H1 (cell line): ENCODE measurements at regions of chr6 and their contacts with region 1.

Region 1: DNA sequence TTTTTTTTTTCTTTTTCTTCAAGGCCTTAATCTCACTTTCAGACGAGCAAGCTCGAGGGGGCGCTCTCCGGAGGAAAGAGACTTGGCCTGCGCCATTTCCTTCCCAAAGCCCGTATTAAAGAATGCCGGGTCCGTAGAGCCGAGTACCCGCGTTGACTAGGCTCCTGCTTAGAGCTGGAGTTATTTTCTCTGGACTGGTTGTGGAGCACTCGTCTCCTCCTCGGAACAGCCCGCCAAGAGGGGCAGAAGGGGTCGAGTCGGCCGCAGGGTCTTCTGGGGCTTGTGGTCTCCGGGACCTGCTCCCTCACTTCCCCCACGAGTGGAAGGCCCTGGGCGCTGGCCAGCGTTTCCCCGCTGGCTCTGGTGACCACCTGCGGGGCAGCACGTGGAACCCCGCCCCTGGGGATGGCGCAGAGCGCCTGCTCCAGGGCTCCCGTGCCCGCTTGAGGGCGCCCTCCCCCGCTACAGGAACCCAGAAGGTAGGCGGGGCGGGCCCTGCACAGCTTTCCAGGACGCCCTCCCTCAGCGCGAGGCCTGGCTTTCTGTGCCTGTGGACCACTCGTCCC is 2.7 kb upstream of the MEI4 start:
- DNase-seq: peak; percentile 81 to 95
- H3K4me3 ChIP-seq: peak overlapping the region; percentile 45 to 66 (median 50); a peak in 7 of 8 replicates
- H3K27ac ChIP-seq: peak overlapping the region; percentile 58; the same call in 1 of the 2 replicates
- H3K4me1 ChIP-seq: no peaks in the 10 kb centered on the region
- H3K27me3 ChIP-seq: no peaks in the 10 kb centered on the region
- CTCF ChIP-seq: peak; percentile 69 to 89 (median 82)
- EP300 ChIP-seq: no peak
- POLR2A ChIP-seq: peak in 1 of 2 experiments; percentile 61; a peak in 2 of 3 replicates
- RAD21 ChIP-seq: peak; percentile 82 to 90

Region 2: GRCh38 chr6:77466055-77466450 is 184.1 kb before region 1 on chr6:
- CTCF ChIA-PET with region 1: interaction called, 37 read pairs
- POLR2A ChIA-PET with region 1: no interaction called
- DNase-seq: peak in 1 of 2 experiments; percentile 72
- H3K4me3 ChIP-seq: peak overlapping the region; percentile 81 to 90 (median 86)
- H3K27ac ChIP-seq: no peak overlapping the region
- H3K4me1 ChIP-seq: peaks cover 0 to 5% (median under 1%) of the 10 kb centered on the region in 4 experiments; a peak in 5 of 7 replicates
- H3K27me3 ChIP-seq: peaks cover 4 to 53% (median 46%) of the 10 kb centered on the region in 4 experiments
- CTCF ChIP-seq: peak; percentile 65 to 79 (median 68)
- EP300 ChIP-seq: no peak
- POLR2A ChIP-seq: no peak
- RAD21 ChIP-seq: peak; percentile 75 to 84

Region 3: GRCh38 chr6:77620278-77620882 is 29.8 kb before region 1 on chr6:
- CTCF ChIA-PET with region 1: interaction called, 11 read pairs
- POLR2A ChIA-PET with region 1: no interaction called
- DNase-seq: no peak
- H3K4me3 ChIP-seq: no peak overlapping the region
- H3K27ac ChIP-seq: no peak overlapping the region
- H3K4me1 ChIP-seq: no peaks in the 10 kb centered on the region
- H3K27me3 ChIP-seq: no peaks in the 10 kb centered on the region
- CTCF ChIP-seq: peak in 2 of 3 experiments; percentile 49 to 71; a peak in 2 of 4 replicates
- EP300 ChIP-seq: no peak
- POLR2A ChIP-seq: no peak
- RAD21 ChIP-seq: peak; percentile 67 to 71

Region 4: GRCh38 chr6:77633993-77634715 is 16.0 kb before region 1 on chr6:
- CTCF ChIA-PET with region 1: interaction called, 10 read pairs
- POLR2A ChIA-PET with region 1: no interaction called
- DNase-seq: no peak
- H3K4me3 ChIP-seq: no peak overlapping the region
- H3K27ac ChIP-seq: no peak overlapping the region
- H3K4me1 ChIP-seq: no peaks in the 10 kb centered on the region
- H3K27me3 ChIP-seq: no peaks in the 10 kb centered on the region
- CTCF ChIP-seq: no peak
- EP300 ChIP-seq: no peak
- POLR2A ChIP-seq: no peak
- RAD21 ChIP-seq: no peak

Region 5: GRCh38 chr6:77669904-77670303 is 19.7 kb after region 1 on chr6:
- CTCF ChIA-PET with region 1: interaction called, 11 read pairs
- POLR2A ChIA-PET with region 1: no interaction called
- DNase-seq: no peak
- H3K4me3 ChIP-seq: no peak overlapping the region
- H3K27ac ChIP-seq: no peak overlapping the region
- H3K4me1 ChIP-seq: no peaks in the 10 kb centered on the region
- H3K27me3 ChIP-seq: no peaks in the 10 kb centered on the region
- CTCF ChIP-seq: no peak
- EP300 ChIP-seq: no peak
- POLR2A ChIP-seq: no peak
- RAD21 ChIP-seq: no peak

Region 6: GRCh38 chr6:77707603-77708002 is 57.4 kb after region 1 on chr6:
- CTCF ChIA-PET with region 1: interaction called, 11 read pairs
- POLR2A ChIA-PET with region 1: no interaction called
- DNase-seq: no peak
- H3K4me3 ChIP-seq: no peak overlapping the region
- H3K27ac ChIP-seq: no peak overlapping the region
- H3K4me1 ChIP-seq: peaks cover 0 to 5% (median 2%) of the 10 kb centered on the region in 4 experiments; a peak in 2 of 7 replicates
- H3K27me3 ChIP-seq: no peaks in the 10 kb centered on the region
- CTCF ChIP-seq: peak in 2 of 3 experiments; percentile 23 to 24; a peak in 2 of 4 replicates
- EP300 ChIP-seq: no peak
- POLR2A ChIP-seq: no peak
- RAD21 ChIP-seq: peak in 1 of 2 experiments; percentile 21; a peak in 1 of 4 replicates

Region 7: DNA sequence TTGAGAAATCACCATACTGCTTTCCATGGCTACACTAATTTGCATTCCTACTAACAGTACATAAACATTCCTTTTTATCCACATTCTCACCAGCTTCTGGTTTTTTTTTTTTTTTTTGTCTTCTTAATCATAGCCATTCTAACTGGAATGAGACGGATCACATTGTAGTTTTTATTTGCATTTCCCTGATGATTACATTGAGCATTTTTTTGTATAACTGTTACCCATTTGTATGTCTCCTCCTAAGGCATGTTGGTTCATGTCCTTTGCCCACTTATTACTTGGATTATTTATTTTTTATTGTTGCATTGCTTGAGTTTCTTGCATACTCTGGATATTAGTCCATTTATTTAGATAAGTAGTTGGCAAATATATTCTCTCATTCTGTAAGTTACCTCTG is 260.6 kb after region 1 on chr6:
- CTCF ChIA-PET with region 1: no interaction called
- POLR2A ChIA-PET with region 1: no interaction called
- DNase-seq: no peak
- H3K4me3 ChIP-seq: no peak overlapping the region
- H3K27ac ChIP-seq: no peak overlapping the region
- H3K4me1 ChIP-seq: no peaks in the 10 kb centered on the region
- H3K27me3 ChIP-seq: no peaks in the 10 kb centered on the region
- CTCF ChIP-seq: no peak
- EP300 ChIP-seq: no peak
- POLR2A ChIP-seq: no peak
- RAD21 ChIP-seq: no peak

Region 8: GRCh38 chr6:77926198-77926752 is 276.1 kb after region 1 on chr6:
- CTCF ChIA-PET with region 1: interaction called, 16 read pairs
- POLR2A ChIA-PET with region 1: no interaction called
- DNase-seq: no peak
- H3K4me3 ChIP-seq: no peak overlapping the region
- H3K27ac ChIP-seq: no peak overlapping the region
- H3K4me1 ChIP-seq: no peaks in the 10 kb centered on the region
- H3K27me3 ChIP-seq: no peaks in the 10 kb centered on the region
- CTCF ChIP-seq: peak in 2 of 3 experiments; percentile 62 to 65; a peak in 3 of 4 replicates
- EP300 ChIP-seq: no peak
- POLR2A ChIP-seq: no peak
- RAD21 ChIP-seq: peak; percentile 86 to 88